Aorta (tissue), 5 donors: ENCODE measurements at regions of chr17 and their contacts with region 1.

Region 1: DNA sequence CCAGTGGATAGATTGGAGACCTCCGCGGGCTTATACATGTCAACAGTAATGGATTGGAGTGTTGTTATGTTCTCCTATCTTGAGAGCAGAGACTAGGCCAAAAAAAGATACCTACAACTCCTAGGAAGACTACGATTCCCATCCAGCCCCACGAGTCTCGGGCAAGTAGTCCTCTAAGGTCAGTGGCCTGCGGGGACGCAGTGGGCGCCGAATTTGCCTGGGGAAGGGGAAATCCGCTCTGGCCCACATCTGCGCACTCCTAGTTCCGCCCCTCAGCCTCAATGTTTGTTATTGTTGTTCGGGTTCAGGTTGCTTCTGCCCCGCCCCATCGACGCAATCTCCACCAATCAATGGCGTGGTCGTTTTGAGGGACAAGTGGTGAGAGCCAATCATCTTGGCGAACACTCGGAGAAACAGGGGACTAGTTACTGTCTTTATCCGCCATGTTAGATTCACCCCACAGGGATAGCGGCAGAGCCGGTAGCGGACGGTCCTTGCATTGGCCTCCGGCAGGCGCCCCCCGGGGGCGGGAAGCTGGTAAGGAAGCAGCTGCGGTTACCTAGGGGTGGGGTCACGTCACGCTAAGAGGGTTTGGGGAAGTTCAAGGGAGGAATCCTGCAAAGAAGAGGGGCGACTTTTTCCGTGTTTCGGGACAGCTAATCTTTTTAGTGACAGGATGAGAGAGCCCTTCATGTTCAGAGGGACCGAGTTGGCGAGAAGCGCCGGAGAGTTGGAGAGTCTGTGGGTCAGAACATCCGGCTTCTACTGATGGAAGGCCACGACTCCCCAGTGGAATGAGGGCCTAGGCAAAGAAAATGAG is at the start of gene NBR1:
- DNase-seq: peak; percentile 94 to 96
- ATAC-seq: peak; percentile 94
- H3K4me3 ChIP-seq: peak within 1 kb of the TSS; percentile 79 to 85
- H3K27ac ChIP-seq: peak within 1 kb of the TSS; percentile 96 to 97
- H3K4me1 ChIP-seq: no peaks in the 10 kb centered on the region
- H3K27me3 ChIP-seq: no peaks in the 10 kb centered on the region
- total RNA-seq, gene NBR1: 93.7 to 99.1 TPM

Region 2: DNA sequence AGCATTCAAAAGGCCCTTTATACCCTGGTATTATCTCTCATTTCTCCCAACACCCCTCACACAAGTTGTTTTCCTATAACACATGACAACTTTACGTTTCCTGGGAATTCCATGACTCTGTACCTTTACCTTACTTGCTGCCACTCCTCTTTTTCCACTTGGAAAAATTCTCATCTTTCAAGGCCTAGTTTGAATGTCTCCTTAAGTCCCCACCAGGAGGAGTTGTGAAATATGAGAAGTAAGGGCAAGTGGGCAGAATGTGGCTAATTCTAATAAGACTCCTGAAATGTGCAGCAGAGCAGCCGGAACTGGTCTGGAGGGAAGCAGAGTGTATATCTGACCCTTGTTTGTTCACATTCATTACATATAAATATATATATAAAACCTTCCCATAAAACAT is 85.5 kb before region 1 on chr17:
- intact Hi-C with region 1: loop called (anchors 5 to 10 kb)
- DNase-seq: no peak
- ATAC-seq: no peak
- H3K4me3 ChIP-seq: no peak overlapping the region
- H3K27ac ChIP-seq: peak overlapping the region in 1 of 2 donors; percentile 82
- H3K4me1 ChIP-seq: peaks cover 0 to 2% of the 10 kb centered on the region in 2 donors
- H3K27me3 ChIP-seq: no peaks in the 10 kb centered on the region

Region 3: DNA sequence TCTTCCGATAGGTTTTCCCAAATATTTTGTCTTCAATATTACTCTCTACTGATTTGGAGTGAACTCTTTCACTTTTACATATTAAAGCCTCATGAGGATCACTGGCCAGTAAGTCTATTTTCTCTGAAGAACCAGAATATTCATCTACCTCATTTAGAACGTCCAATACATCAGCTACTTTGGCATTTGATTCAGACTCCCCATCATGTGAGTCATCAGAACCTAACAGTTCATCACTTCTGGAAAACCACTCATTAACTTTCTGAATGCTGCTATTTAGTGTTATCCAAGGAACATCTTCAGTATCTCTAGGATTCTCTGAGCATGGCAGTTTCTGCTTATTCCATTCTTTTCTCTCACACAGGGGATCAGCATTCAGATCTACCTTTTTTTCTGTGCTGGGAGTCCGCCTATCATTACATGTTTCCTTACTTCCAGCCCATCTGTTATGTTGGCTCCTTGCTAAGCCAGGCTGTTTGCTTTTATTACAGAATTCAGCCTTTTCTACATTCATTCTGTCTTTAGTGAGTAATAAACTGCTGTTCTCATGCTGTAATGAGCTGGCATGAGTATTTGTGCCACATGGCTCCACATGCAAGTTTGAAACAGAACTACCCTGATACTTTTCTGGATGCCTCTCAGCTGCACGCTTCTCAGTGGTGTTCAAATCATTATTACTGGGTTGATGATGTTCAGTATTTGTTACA is 76.7 kb before region 1 on chr17:
- intact Hi-C with region 1: loop called (anchors 5 to 10 kb)
- DNase-seq: no peak
- ATAC-seq: no peak
- H3K4me3 ChIP-seq: no peak overlapping the region
- H3K27ac ChIP-seq: peak overlapping the region in 1 of 2 donors; percentile 87
- H3K4me1 ChIP-seq: peaks cover 2 to 18% of the 10 kb centered on the region in 2 donors
- H3K27me3 ChIP-seq: no peaks in the 10 kb centered on the region

Region 4: GRCh38 chr17:43125133-43125966 is 45.6 kb before region 1 on chr17 and contains the start of gene BRCA1:
- intact Hi-C with region 1: loop called (anchors 2 to 5 kb)
- DNase-seq: peak; percentile 94 to 95
- ATAC-seq: peak; percentile 98
- H3K4me3 ChIP-seq: peak within 1 kb of the TSS; percentile 67 to 75
- H3K27ac ChIP-seq: peak within 1 kb of the TSS in 1 of 2 donors; percentile 72
- H3K4me1 ChIP-seq: no peaks in the 10 kb centered on the region
- H3K27me3 ChIP-seq: no peaks in the 10 kb centered on the region
- total RNA-seq, gene BRCA1: 4.3 to 6.6 TPM

Region 5: GRCh38 chr17:43356999-43357398 is 186.0 kb after region 1 on chr17:
- intact Hi-C with region 1: loop called in 1 of 2 experiments (anchors 10 kb)
- DNase-seq: peak in 1 of 2 donors; percentile 65
- ATAC-seq: no peak
- H3K4me3 ChIP-seq: no peak overlapping the region
- H3K27ac ChIP-seq: no peak overlapping the region
- H3K4me1 ChIP-seq: peaks cover 0 to 2% of the 10 kb centered on the region in 2 donors
- H3K27me3 ChIP-seq: no peaks in the 10 kb centered on the region